ENCODE measurements at regions of chr3 and their contacts with region 1.

Region 1: DNA sequence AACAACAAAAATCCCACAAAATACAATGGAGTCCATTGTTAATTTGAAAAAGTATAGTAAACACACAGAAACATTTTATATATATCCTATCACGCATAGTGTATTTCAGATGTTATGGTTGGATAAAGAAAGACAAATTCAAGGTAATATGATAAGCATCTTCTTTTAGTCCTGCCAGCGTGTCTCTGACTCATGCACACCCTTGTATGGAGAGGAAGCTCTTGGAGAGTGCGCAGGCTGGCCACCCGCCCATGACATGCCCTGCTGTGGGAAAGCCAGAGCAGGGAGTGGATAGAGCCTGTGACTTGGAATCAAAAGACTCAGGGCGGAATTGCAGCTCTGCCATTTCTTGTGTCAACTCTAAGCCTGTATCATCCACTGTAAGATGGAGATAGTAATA is 23.0 kb upstream of the COPG1 start:
- DNase-seq: peak; percentile 45
- H3K4me3 Mint-ChIP-seq: peak overlapping the region; percentile 8
- H3K27ac Mint-ChIP-seq: peak overlapping the region; percentile 81
- H3K4me1 Mint-ChIP-seq: peaks cover 47% of the 10 kb centered on the region
- H3K27me3 Mint-ChIP-seq: no peaks in the 10 kb centered on the region

Region 2: GRCh38 chr3:129238945-129239706 is 12.8 kb after region 1 on chr3:
- intact Hi-C with region 1: loop called (anchors 1 kb)
- DNase-seq: peak; percentile 53
- H3K4me3 Mint-ChIP-seq: peak overlapping the region; percentile 43
- H3K27ac Mint-ChIP-seq: peak overlapping the region; percentile 93
- H3K4me1 Mint-ChIP-seq: peaks cover 40% of the 10 kb centered on the region
- H3K27me3 Mint-ChIP-seq: no peaks in the 10 kb centered on the region